ENCODE measurements at regions of chr11 and their contacts with region 1.

Region 1: GRCh38 chr11:78228467-78228866 is 39.7 kb downstream of the USP35 start:
- DNase-seq: peak; percentile 52 to 73 (median 64)
- ATAC-seq: peak; percentile 85
- H3K4me3 ChIP-seq: no peak overlapping the region
- H3K27ac ChIP-seq: no peak overlapping the region
- H3K4me1 ChIP-seq: peaks cover 6 to 23% of the 10 kb centered on the region in 2 experiments; a peak in 4 of 5 replicates
- H3K27me3 ChIP-seq: no peaks in the 10 kb centered on the region
- CTCF ChIP-seq: peak; percentile 70 to 82 (median 71)
- EP300 ChIP-seq: no peak
- POLR2A ChIP-seq: no peak
- RAD21 ChIP-seq: peak; percentile 92 to 94

Region 2: GRCh38 chr11:78256962-78257361 is 28.5 kb after region 1 on chr11:
- CTCF ChIA-PET with region 1: no interaction called
- POLR2A ChIA-PET with region 1: interaction called, 4 read pairs
- in situ Hi-C with region 1: no loop called
- intact Hi-C with region 1: loop called (anchors 2 kb)
- DNase-seq: peak; percentile 53 to 87 (median 64)
- ATAC-seq: peak; percentile 80
- H3K4me3 ChIP-seq: no peak overlapping the region
- H3K27ac ChIP-seq: peak overlapping the region; percentile 54; the same call in 2 of the 3 replicates
- H3K4me1 ChIP-seq: peaks cover 17 to 52% of the 10 kb centered on the region in 2 experiments
- H3K27me3 ChIP-seq: no peaks in the 10 kb centered on the region
- CTCF ChIP-seq: no peak
- EP300 ChIP-seq: peak; percentile 62
- POLR2A ChIP-seq: no peak
- RAD21 ChIP-seq: peak in 1 of 2 experiments; percentile 20; a peak in 2 of 4 replicates

Region 3: GRCh38 chr11:78338138-78338537 is 109.7 kb after region 1 on chr11:
- CTCF ChIA-PET with region 1: no interaction called
- POLR2A ChIA-PET with region 1: no interaction called
- in situ Hi-C with region 1: no loop called
- intact Hi-C with region 1: loop called (anchors 5 kb)
- DNase-seq: peak in 1 of 4 experiments; percentile 16
- ATAC-seq: peak; percentile 19; the same call in 1 of the 3 replicates
- H3K4me3 ChIP-seq: no peak overlapping the region
- H3K27ac ChIP-seq: peak overlapping the region; percentile 60; the same call in 1 of the 3 replicates
- H3K4me1 ChIP-seq: peaks cover 13 to 55% of the 10 kb centered on the region in 2 experiments; a peak in 4 of 5 replicates
- H3K27me3 ChIP-seq: no peaks in the 10 kb centered on the region
- CTCF ChIP-seq: no peak
- EP300 ChIP-seq: no peak
- POLR2A ChIP-seq: no peak
- RAD21 ChIP-seq: no peak

Region 4: GRCh38 chr11:78416305-78417178 is 188.1 kb after region 1 on chr11:
- CTCF ChIA-PET with region 1: interaction called, 6 read pairs
- POLR2A ChIA-PET with region 1: interaction called, 3 read pairs
- in situ Hi-C with region 1: no loop called
- intact Hi-C with region 1: loop called (anchors 1 kb)
- DNase-seq: peak; percentile 80 to 91 (median 82)
- ATAC-seq: peak; percentile 74
- H3K4me3 ChIP-seq: peak overlapping the region; percentile 69
- H3K27ac ChIP-seq: peak overlapping the region; percentile 89
- H3K4me1 ChIP-seq: peaks cover 23 to 41% of the 10 kb centered on the region in 2 experiments
- H3K27me3 ChIP-seq: no peaks in the 10 kb centered on the region
- CTCF ChIP-seq: peak; percentile 50 to 68 (median 63)
- EP300 ChIP-seq: peak; percentile 54; the same call in 1 of the 2 replicates
- POLR2A ChIP-seq: peak; percentile 76
- RAD21 ChIP-seq: peak in 1 of 2 experiments; percentile 45; a peak in 3 of 4 replicates

Region 5: DNA sequence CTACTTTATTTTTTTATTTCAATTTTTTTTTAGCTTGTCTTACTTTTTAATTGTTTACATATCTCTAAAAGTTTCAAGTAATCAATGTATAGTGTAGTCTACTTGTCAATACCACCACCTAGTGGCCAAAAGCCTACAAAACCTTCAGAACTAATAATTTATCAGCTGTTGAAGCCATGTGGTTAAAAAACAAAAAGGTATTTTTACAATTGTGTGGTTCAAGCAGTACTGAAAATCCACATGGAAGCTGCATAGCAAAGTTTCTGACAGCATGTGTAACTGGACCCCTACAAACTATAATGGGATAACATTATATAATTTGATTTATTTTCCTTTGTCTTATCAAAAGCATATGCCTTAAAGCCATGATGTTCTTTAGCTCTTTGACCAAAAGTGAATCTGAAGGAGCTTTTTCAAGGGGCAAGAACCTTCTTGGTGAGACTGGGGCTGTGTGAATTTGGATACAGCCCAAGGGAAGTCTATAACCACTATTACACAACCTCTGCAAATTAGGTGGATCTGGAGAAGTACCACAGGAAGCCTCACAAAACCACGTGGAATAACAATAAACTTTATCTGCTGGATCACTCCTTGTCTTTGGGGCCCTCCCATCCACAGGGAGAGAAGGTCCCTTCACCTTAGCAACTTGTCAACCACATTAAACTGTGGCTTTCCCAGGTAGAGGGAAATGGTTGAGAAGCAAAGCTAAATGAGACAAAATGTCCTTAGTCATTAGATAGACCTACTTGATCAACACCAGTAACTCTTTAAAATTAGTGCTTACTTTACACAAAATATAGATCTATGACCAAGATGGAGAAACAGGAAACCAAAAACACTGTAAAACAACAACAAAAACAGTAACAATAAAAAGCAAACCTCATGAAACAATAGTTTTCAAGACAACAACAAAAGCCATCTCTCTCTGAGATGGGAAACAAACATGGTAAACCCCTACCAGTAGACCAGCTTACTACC is 336.3 kb after region 1 on chr11:
- CTCF ChIA-PET with region 1: interaction called, 30 read pairs
- POLR2A ChIA-PET with region 1: interaction called, 3 read pairs
- in situ Hi-C with region 1: loop called (anchors 5 kb)
- intact Hi-C with region 1: loop called (anchors 1 kb)
- DNase-seq: peak; percentile 33 to 73 (median 38)
- ATAC-seq: peak; percentile 88
- H3K4me3 ChIP-seq: no peak overlapping the region
- H3K27ac ChIP-seq: peak overlapping the region; percentile 23; the same call in 1 of the 3 replicates
- H3K4me1 ChIP-seq: peaks cover 0 to 3% of the 10 kb centered on the region in 2 experiments; a peak in 1 of 5 replicates
- H3K27me3 ChIP-seq: no peaks in the 10 kb centered on the region
- CTCF ChIP-seq: peak; percentile 40 to 83 (median 53); a peak in 4 of 6 replicates
- EP300 ChIP-seq: no peak
- POLR2A ChIP-seq: no peak
- RAD21 ChIP-seq: peak; percentile 78 to 87